ENCODE measurements at regions of chr4 and their contacts with region 1.

Region 1: DNA sequence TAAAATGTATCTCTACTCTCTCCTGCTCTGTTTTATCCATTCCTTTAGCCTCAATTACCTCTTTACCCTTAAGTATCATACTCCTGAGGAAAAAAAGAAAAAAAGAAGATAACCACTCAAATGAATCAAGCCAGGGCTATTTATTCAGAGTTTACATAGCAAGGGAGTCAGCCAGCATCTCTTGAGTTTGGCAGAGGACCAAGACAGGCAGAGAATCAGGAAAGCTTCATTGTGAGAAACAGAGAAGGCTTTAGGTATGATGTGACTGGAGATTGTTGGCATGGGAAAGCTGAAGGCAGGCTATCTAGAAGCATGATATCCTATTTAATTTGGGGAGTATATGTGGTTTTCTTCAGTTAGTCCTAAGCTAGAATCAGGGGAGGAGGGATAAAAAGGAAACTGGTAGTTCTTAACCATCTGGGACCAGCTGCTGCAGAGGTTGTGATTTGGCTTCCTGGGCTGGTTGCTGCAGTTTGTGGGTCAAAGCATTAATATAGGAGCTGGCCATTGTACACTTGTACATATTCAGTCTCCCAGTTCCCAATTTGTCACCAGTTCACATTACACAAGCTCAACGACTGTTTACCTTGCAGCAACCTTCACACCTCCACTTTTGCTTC is 11.2 kb downstream of the APELA start:
- DNase-seq: no peak
- H3K4me3 ChIP-seq: no peak overlapping the region
- H3K27ac ChIP-seq: no peak overlapping the region
- H3K4me1 ChIP-seq: peaks cover 0 to 6% (median 1%) of the 10 kb centered on the region in 4 experiments; a peak in 2 of 7 replicates
- H3K27me3 ChIP-seq: no peaks in the 10 kb centered on the region
- CTCF ChIP-seq: no peak
- EP300 ChIP-seq: no peak
- POLR2A ChIP-seq: peak in 1 of 2 experiments; percentile 44; a peak in 1 of 3 replicates
- RAD21 ChIP-seq: no peak

Region 2: DNA sequence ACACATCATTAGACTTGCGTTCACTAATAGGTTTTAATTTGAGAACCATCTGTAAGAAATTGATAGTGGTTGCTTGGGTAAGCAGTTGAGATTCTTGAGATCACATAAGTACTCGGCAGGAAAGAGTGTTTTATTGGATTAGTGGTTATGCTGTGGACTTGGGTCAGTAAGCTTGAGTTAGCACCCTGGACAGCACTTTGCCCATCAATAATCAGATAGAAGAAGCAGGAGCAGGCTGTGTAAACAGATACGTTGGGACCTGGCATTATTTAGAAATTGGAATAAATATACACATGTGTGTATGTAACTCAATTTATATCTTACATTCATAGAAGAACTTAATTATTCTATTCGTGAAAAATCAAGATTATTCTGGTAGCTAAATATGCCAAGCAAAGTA is 491.8 kb before region 1 on chr4:
- CTCF ChIA-PET with region 1: no interaction called
- POLR2A ChIA-PET with region 1: no interaction called
- DNase-seq: no peak
- H3K4me3 ChIP-seq: no peak overlapping the region
- H3K27ac ChIP-seq: no peak overlapping the region
- H3K4me1 ChIP-seq: no peaks in the 10 kb centered on the region
- H3K27me3 ChIP-seq: no peaks in the 10 kb centered on the region
- CTCF ChIP-seq: no peak
- EP300 ChIP-seq: no peak
- POLR2A ChIP-seq: no peak
- RAD21 ChIP-seq: no peak

Region 3: DNA sequence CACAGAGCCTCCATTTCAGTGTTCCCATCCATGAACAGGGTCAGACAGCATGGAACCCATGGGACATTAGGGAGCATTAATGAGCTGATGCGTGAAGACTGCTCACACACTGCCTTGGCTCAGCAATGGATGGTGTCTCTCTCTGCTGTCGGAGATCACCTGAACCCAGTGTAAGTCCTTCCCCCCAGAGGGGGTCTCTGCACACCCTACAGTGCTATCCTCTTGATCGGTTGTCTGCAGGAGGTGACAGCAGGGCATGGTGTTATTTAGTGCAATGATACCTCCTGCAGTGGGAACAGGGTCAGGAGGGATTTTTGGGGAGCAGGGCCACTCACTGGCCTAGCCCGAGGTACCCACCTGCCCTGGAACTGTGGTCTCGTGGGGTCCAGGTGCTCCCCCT is 14.4 kb after region 1 on chr4:
- CTCF ChIA-PET with region 1: interaction called, 7 read pairs
- POLR2A ChIA-PET with region 1: interaction called, 43 read pairs
- DNase-seq: no peak
- H3K4me3 ChIP-seq: no peak overlapping the region
- H3K27ac ChIP-seq: no peak overlapping the region
- H3K4me1 ChIP-seq: peaks cover 0 to 8% (median 0%) of the 10 kb centered on the region in 4 experiments; a peak in 4 of 7 replicates
- H3K27me3 ChIP-seq: no peaks in the 10 kb centered on the region
- CTCF ChIP-seq: no peak
- EP300 ChIP-seq: no peak
- POLR2A ChIP-seq: no peak
- RAD21 ChIP-seq: no peak

Measured in H1 (cell line).